ENCODE measurements at regions of chr1 and their contacts with region 1.

Region 1: GRCh38 chr1:145858894-145859490 is at the start of gene PIAS3:
- DNase-seq: peak; percentile 91
- ATAC-seq: peak; percentile 86
- H3K4me3 Mint-ChIP-seq: peak within 1 kb of the TSS; percentile 96
- H3K27ac Mint-ChIP-seq: peak within 1 kb of the TSS; percentile 92
- H3K4me1 Mint-ChIP-seq: peaks cover 14% of the 10 kb centered on the region
- H3K27me3 Mint-ChIP-seq: peaks cover 2% of the 10 kb centered on the region
- CTCF ChIP-seq: no peak
- total RNA-seq, gene PIAS3: 29.0 and 30.9 TPM in 2 replicates

Region 2: GRCh38 chr1:145751491-145752037 is 107.4 kb before region 1 on chr1:
- CTCF ChIA-PET with region 1: no interaction called
- POLR2A ChIA-PET with region 1: no interaction called
- intact Hi-C with region 1: no loop called
- DNase-seq: no peak
- ATAC-seq: no peak
- H3K4me3 Mint-ChIP-seq: no peak overlapping the region
- H3K27ac Mint-ChIP-seq: no peak overlapping the region
- H3K4me1 Mint-ChIP-seq: no peaks in the 10 kb centered on the region
- H3K27me3 Mint-ChIP-seq: no peaks in the 10 kb centered on the region
- CTCF ChIP-seq: no peak

Region 3: DNA sequence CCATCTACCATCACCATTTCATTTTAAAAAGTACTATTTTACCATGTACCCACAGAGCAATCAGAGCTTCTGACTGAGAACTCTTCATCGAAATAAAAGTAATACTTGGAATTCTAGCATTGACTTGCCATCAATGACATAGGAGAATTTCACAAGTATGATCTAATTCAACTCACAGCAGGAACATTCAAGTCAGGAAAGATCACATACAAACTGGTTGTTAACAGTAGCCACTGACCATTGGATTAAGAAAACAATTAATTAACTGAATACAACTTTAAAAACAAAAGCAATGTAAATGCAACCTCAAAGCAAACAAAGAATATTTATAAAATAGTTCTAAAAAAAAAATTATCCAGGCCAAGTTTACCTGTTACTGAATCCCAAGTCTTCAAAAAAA is 53.9 kb before region 1 on chr1:
- CTCF ChIA-PET with region 1: no interaction called
- POLR2A ChIA-PET with region 1: no interaction called
- intact Hi-C with region 1: no loop called
- DNase-seq: no peak
- ATAC-seq: no peak
- H3K4me3 Mint-ChIP-seq: no peak overlapping the region
- H3K27ac Mint-ChIP-seq: no peak overlapping the region
- H3K4me1 Mint-ChIP-seq: peaks cover 37% of the 10 kb centered on the region
- H3K27me3 Mint-ChIP-seq: no peaks in the 10 kb centered on the region
- CTCF ChIP-seq: no peak

Region 4: DNA sequence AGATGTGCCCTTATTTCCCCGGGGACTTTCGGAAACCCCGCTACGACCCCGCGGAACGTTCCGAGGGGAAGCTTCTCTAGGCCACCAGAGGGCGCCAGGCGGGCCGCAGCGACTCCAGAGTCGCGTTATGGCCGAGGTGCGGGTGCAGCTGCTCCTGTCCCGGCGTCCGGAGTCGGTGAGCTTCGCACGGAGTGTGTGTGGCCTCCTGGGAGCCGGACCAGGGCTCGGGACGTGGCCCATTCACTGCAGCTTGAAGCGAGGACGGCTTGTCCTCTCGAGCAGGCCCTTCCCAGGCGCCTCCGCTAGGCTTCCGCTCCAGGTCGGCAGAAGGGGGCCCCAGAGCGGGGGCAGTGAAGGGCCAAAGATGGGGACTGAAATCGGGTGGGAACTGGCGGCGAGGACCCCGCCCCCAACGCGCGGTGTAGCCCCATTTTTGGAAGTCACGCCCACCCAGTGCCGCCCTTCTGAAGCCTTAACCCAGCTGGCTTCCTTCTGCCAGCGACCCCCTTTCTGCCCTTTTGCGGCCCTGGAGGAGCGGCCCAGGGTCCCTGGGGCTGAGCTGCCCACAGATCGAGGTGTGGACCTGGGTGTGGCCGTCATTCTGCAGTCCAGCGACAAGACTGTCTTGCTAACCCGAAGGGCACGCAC is 13.4 kb before region 1 on chr1 and contains the start of gene NUDT17:
- CTCF ChIA-PET with region 1: interaction called, 98 read pairs
- POLR2A ChIA-PET with region 1: interaction called, 151 read pairs
- intact Hi-C with region 1: loop called (anchors 1 kb)
- DNase-seq: peak; percentile 71
- ATAC-seq: peak; percentile 69
- H3K4me3 Mint-ChIP-seq: no peak within 1 kb of the TSS
- H3K27ac Mint-ChIP-seq: no peak within 1 kb of the TSS
- H3K4me1 Mint-ChIP-seq: peaks cover 8% of the 10 kb centered on the region
- H3K27me3 Mint-ChIP-seq: no peaks in the 10 kb centered on the region
- CTCF ChIP-seq: peak; percentile 64
- total RNA-seq, gene NUDT17: 2.9 and 5.4 TPM in 2 replicates

Region 5: DNA sequence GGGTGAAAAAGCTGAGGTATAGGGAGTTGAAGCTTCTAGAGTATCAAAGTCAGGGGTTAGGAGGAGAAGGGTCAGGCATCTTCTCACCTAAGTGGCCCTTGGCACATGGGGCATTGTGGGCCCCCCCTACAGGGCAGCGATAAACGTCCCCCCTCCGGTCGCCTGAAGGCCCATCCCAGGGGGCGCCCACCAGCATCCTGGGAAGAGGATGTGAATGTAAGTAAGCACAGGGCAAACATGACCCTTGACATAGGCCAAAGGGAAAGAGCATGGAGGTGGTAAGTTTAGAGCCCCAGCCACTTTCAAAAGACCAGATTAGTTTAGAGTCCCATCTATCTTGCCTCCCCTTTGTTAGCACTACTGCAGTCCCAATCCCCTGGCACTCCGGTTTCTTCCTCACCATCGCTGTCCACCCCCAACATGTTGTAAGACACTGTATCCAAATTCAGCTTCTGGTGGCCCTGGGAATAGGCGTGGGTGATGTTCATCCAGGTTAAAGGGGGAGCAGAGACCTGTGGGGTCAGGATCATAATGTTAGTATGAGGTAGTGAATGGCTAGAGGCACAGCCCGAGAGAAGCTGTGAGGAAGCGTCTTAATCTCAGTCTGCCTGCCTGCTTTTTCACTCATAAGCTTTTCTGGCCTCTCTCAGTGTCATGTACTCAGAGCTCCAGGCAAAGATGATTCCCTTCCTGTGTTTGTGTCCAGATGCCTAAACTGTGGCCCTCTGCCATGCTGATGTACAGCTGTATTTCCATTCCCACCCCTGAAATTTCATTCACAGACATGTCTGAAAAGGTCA is 48.2 kb after region 1 on chr1:
- CTCF ChIA-PET with region 1: interaction called, 5 read pairs
- POLR2A ChIA-PET with region 1: interaction called, 8 read pairs
- intact Hi-C with region 1: loop called (anchors 1 kb)
- DNase-seq: no peak
- ATAC-seq: no peak
- H3K4me3 Mint-ChIP-seq: no peak overlapping the region
- H3K27ac Mint-ChIP-seq: no peak overlapping the region
- H3K4me1 Mint-ChIP-seq: peaks cover 5% of the 10 kb centered on the region
- H3K27me3 Mint-ChIP-seq: no peaks in the 10 kb centered on the region
- CTCF ChIP-seq: no peak

Region 6: DNA sequence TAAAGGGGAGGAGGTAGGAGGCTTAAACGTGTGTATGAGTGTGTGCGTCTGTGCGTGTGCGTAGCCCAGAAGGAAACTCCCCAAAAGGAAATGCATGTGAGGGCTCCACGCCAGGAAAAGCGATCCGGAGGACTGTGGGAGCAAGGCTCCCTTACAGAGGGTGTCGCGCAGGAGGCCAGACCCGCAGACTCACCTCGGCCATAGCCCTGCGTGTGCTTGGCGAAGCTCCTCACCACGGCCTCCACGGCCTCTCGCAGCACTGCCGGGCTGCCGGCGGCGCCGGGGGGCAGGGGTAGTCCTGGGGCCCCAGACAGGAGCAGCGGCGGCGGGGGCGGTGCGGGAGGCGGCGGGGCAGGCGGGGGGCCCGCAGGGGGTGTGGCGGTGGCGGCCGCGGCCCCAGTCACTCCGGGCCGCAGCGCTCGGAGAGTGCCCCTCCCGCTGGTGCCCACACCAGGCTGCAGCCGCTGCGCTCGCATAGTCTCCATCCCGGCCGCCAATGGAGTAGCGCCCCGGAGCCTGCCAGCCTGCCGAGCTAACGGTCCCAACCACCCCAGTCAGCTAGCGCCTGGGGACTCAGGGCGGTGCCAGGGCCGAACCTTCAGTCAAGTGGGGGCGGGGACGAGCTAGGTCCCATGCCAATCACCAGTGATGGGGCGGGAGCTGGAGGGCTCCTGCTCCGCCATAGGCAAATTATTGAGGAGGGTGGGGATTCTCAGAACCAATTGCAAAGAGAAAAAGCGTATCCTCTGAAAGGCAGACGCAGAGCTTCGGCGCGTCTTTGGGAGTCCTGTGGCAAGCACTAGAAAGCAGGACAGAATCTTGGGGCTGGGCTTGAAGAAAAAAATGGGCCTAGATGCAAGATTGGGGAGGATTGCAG is 98.7 kb after region 1 on chr1 and contains the start of gene LIX1L:
- CTCF ChIA-PET with region 1: no interaction called
- POLR2A ChIA-PET with region 1: interaction called, 30 read pairs
- intact Hi-C with region 1: no loop called
- DNase-seq: peak; percentile 87
- ATAC-seq: peak; percentile 89
- H3K4me3 Mint-ChIP-seq: peak within 1 kb of the TSS; percentile 96
- H3K27ac Mint-ChIP-seq: peak within 1 kb of the TSS; percentile 94
- H3K4me1 Mint-ChIP-seq: peaks cover 64% of the 10 kb centered on the region
- H3K27me3 Mint-ChIP-seq: no peaks in the 10 kb centered on the region
- CTCF ChIP-seq: no peak
- total RNA-seq, gene LIX1L: 30.1 and 31.7 TPM in 2 replicates

Region 7: DNA sequence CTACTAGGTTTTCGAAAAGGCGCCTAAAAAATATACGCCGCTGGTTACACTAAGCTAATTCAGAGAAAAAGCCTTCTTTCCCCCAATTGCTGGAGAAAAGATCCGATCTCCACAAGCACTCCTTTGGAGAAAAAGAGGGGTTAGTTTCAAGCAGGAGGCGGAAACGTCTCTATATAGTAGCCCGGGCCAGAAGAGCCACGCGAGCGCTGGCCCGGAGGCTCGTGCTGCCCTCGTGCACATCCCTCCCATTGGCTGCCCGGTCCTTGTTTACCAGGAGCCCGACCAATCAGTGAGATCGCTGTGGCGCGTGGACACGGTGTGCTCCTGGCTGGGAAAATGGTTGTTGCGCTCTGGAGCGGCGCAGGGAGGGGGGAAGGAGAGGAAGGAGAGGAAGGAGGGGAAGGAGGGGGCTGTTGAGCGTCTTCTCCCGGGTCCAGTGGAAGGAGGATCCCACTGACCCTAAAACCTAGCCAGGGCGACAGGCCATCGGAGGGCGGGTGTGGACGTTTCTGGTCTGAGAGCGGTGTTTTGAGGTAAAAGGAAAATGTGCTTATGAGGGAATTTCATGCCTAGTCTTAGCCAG is 137.5 kb after region 1 on chr1 and contains the start of gene TXNIP:
- CTCF ChIA-PET with region 1: no interaction called
- POLR2A ChIA-PET with region 1: interaction called, 17 read pairs
- intact Hi-C with region 1: no loop called
- DNase-seq: peak; percentile 82
- ATAC-seq: peak; percentile 85
- H3K4me3 Mint-ChIP-seq: peak within 1 kb of the TSS; percentile 88
- H3K27ac Mint-ChIP-seq: peak within 1 kb of the TSS; percentile 97
- H3K4me1 Mint-ChIP-seq: peaks cover 74% of the 10 kb centered on the region
- H3K27me3 Mint-ChIP-seq: no peaks in the 10 kb centered on the region
- CTCF ChIP-seq: no peak
- total RNA-seq, gene TXNIP: 300 and 306 TPM in 2 replicates

Region 8: GRCh38 chr1:146049436-146049835 is 190.4 kb after region 1 on chr1:
- CTCF ChIA-PET with region 1: no interaction called
- POLR2A ChIA-PET with region 1: interaction called, 18 read pairs
- intact Hi-C with region 1: no loop called
- DNase-seq: no peak
- ATAC-seq: no peak
- H3K4me3 Mint-ChIP-seq: no peak overlapping the region
- H3K27ac Mint-ChIP-seq: no peak overlapping the region
- H3K4me1 Mint-ChIP-seq: peaks cover 22% of the 10 kb centered on the region
- H3K27me3 Mint-ChIP-seq: no peaks in the 10 kb centered on the region
- CTCF ChIP-seq: no peak